Heart left ventricle (tissue), 16 donors: ENCODE measurements at regions of chr19 and their contacts with region 1.

Region 1: GRCh38 chr19:5018224-5019015 is 49.5 kb downstream of the KDM4B start:
- DNase-seq: no peak
- ATAC-seq: no peak
- H3K4me3 ChIP-seq: no peak overlapping the region
- H3K27ac ChIP-seq: no peak overlapping the region
- H3K4me1 ChIP-seq: peaks cover 0 to 14% (median 9%) of the 10 kb centered on the region in 12 donors
- H3K27me3 ChIP-seq: no peaks in the 10 kb centered on the region
- CTCF ChIP-seq: no peak
- POLR2A ChIP-seq: no peak

Region 2: GRCh38 chr19:4988770-4989251 is 29.6 kb before region 1 on chr19:
- intact Hi-C with region 1: loop called in 1 of 10 experiments (anchors 5 kb)
- DNase-seq: peak in 3 of 5 donors; percentile 50 to 86 (median 74)
- ATAC-seq: peak; percentile 22 to 83 (median 70)
- H3K4me3 ChIP-seq: peak overlapping the region in 2 of 12 donors; percentile 4 to 7
- H3K27ac ChIP-seq: peak overlapping the region in 8 of 12 donors; percentile 13 to 46 (median 35)
- H3K4me1 ChIP-seq: peaks cover 9 to 77% (median 50%) of the 10 kb centered on the region in 12 donors
- H3K27me3 ChIP-seq: no peaks in the 10 kb centered on the region
- CTCF ChIP-seq: no peak
- POLR2A ChIP-seq: no peak